Astrocyte of the cerebellum (primary cell): ENCODE measurements at regions of chr1 and their contacts with region 1.

Region 1: DNA sequence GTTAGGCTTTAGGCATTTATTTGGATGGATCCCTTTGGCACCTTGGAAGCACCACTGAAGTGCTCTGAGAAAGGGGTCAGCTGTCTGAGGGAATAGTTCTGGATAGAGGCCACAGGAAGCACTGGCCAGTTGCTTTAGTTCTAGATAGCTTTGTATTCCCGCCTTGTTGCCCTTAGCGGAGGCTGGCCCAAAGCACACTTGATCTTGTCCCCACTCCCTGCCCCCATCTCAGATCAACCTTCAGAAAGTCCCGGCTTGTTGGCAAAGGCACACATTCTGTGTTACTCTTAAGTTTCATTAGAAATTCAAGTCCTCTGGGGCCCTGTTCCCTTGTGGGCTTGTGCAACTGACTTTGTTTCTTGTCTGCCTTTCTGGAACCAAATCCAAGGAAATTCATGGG is 15.2 kb upstream of the NBL1 start:
- DNase-seq: no peak
- H3K4me3 ChIP-seq: no peak overlapping the region
- CTCF ChIP-seq: no peak

Region 2: DNA sequence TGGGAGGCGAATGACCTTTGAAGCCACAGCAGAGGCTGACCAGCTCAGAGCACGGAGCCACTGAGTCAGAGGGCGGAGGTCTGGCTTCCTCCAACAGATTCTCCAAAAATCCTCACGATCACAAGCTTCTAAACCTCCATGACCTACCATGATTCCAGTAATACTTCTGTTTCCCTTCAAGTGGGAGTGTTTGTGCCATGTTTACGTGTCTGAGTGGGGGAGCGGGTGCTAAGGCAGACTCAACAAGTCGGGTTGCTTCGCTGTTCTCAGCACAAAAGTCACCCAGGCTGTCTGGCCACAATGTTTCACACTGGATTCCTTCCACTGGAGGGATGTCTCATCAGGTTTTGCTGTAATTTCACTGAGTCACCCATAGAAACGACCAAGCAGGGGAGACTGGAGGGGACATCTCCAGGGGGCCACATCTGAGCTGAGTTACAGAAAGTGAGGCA is 230.5 kb before region 1 on chr1:
- in situ Hi-C with region 1: loop called (anchors 5 kb)
- DNase-seq: peak; percentile 96
- H3K4me3 ChIP-seq: no peak overlapping the region
- CTCF ChIP-seq: peak; percentile 67

Region 3: GRCh38 chr1:19582302-19582701 is 46.6 kb before region 1 on chr1:
- in situ Hi-C with region 1: loop called (anchors 5 kb)
- DNase-seq: no peak
- H3K4me3 ChIP-seq: no peak overlapping the region
- CTCF ChIP-seq: peak; percentile 36